ENCODE measurements at regions of chr3 and their contacts with region 1.

Region 1: GRCh38 chr3:122942937-122943827 is 84.4 kb downstream of the SEMA5B start:
- DNase-seq: peak; percentile 38
- ATAC-seq: peak; percentile 59
- H3K4me3 Mint-ChIP-seq: no peak overlapping the region
- H3K27ac Mint-ChIP-seq: no peak overlapping the region
- H3K4me1 Mint-ChIP-seq: peaks cover 27% of the 10 kb centered on the region
- H3K27me3 Mint-ChIP-seq: no peaks in the 10 kb centered on the region
- CTCF ChIP-seq: no peak

Region 2: DNA sequence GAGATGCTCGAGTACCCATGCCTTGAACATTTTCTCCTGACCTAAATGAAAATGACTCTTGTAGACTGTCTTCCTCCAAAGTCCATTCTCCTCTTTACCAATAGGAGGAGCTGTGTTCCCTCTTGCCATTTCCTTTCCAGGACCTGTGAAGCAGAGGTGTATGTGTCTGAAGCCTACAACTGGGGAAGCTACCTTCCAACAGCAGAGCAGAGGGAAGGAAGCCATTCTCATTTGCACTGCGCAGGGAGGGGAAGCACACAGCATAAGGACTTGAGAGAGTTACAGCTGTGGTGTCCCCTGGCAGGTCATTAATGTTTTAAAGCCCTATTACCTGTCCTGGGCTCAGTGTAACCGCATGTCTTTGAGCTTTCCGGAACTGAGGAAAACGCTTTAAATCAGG is 188.3 kb before region 1 on chr3:
- CTCF ChIA-PET with region 1: no interaction called
- POLR2A ChIA-PET with region 1: no interaction called
- intact Hi-C with region 1: loop called (anchors 5 kb)
- DNase-seq: no peak
- ATAC-seq: peak; percentile 79
- H3K4me3 Mint-ChIP-seq: no peak overlapping the region
- H3K27ac Mint-ChIP-seq: no peak overlapping the region
- H3K4me1 Mint-ChIP-seq: no peaks in the 10 kb centered on the region
- H3K27me3 Mint-ChIP-seq: no peaks in the 10 kb centered on the region
- CTCF ChIP-seq: peak; percentile 54

Region 3: DNA sequence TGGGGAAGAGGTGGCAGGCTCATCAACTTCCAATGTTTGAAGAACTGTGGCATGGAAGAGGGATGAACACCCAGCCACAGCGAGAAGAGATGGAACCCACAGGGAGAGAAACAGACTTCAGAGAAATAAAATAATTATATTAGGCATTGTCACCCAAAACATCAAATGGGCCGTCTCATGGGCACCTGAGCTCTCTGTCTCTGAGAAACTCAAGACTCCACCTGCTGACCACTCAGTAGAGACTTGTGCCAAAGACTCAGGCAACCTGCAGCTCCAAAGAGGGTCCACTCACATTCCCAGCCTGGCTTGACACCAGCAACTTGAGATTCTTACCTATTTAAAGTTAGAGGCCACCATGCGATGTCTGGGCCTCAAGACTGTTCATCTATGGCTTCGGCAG is 72.4 kb after region 1 on chr3:
- CTCF ChIA-PET with region 1: interaction called, 17 read pairs
- POLR2A ChIA-PET with region 1: no interaction called
- intact Hi-C with region 1: no loop called
- DNase-seq: no peak
- ATAC-seq: no peak
- H3K4me3 Mint-ChIP-seq: no peak overlapping the region
- H3K27ac Mint-ChIP-seq: no peak overlapping the region
- H3K4me1 Mint-ChIP-seq: no peaks in the 10 kb centered on the region
- H3K27me3 Mint-ChIP-seq: peaks cover 23% of the 10 kb centered on the region
- CTCF ChIP-seq: no peak

Measured in activated B cell treated with CpG ODN at 0.5 μM for 24 hours (primary cell).